AG04449 (cell line): ENCODE measurements at regions of chr1 and their contacts with region 1.

Region 1: DNA sequence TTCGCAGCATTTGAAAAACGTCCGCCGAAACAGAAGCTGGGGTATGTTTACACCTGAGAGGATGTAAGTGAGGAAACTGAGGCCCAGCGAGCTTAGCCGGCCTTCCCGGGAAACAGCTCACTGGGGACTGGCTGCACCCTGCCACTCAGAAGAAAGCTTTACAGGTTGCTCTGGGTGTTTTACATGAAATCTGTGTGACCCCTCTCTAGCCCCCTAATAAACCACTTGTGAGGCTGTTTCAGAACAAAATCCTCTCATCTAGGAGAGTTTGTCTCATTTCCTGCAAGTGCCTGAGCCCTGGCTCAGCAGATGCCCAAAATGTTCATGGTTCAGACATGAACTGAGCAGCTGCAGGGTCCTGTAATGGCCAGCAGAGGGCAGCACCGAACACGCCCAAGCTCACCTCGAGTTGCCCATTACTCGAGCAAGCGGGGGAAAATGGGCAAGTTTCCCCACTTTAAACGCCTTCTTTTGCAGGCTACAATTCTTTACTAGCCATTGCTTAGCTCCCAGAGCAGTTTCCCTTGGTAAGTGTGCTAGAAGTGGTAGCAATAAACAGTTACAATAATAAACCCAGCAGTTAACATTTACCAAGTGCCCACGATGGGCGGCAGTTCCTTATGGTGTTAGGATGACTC is 76.4 kb downstream of the FHAD1 start:
- DNase-seq: peak; percentile 46
- H3K4me3 ChIP-seq: no peak overlapping the region
- CTCF ChIP-seq: peak; percentile 97

Region 2: DNA sequence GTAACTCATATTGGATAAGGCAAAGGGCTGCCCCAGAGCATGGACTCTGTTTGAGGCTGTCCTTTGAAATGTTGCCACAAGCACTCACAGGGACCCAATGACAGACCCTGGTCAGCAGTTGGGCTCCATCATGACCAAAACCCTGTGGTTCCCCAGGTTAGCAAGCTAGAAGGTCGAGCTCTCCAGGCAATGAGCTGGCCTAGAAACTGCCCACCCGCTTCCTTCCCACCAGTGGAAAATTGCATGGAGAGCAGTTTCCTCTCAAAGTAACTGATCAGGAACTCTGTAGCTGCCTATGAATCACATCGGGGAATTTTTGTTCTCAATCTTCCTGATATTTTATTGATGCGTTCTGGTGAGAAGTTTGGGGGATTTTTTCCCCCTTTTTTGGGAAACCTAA is 23.7 kb before region 1 on chr1:
- CTCF ChIA-PET with region 1: interaction called, 35 read pairs
- POLR2A ChIA-PET with region 1: no interaction called
- DNase-seq: no peak
- H3K4me3 ChIP-seq: no peak overlapping the region
- CTCF ChIP-seq: no peak

Region 3: DNA sequence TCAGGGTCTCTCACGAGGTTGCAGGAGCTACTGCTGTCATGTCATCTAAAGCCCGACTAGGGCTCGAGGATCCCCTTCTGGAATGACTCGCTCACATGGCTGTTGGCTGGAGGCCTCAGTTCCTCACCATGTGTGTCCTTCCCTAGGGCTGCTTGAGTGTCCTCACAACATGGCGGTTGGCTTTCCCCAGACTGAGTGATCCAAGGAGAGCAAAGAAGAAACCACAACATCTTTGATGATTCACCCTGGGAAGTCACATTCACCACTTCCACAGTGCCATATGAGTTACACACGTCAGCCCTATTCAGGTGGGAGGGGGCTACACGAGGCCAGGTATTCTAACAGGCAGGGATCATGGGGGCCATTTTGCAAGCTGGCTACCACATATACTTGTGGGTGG is 11.6 kb before region 1 on chr1:
- CTCF ChIA-PET with region 1: interaction called, 73 read pairs
- POLR2A ChIA-PET with region 1: no interaction called
- DNase-seq: no peak
- H3K4me3 ChIP-seq: no peak overlapping the region
- CTCF ChIP-seq: no peak

Region 4: GRCh38 chr1:15345711-15346355 is 22.4 kb after region 1 on chr1:
- CTCF ChIA-PET with region 1: interaction called, 41 read pairs
- POLR2A ChIA-PET with region 1: no interaction called
- DNase-seq: no peak
- H3K4me3 ChIP-seq: no peak overlapping the region
- CTCF ChIP-seq: no peak

Region 5: GRCh38 chr1:15417365-15417934 is 94.0 kb after region 1 on chr1:
- CTCF ChIA-PET with region 1: interaction called, 31 read pairs
- POLR2A ChIA-PET with region 1: no interaction called
- DNase-seq: no peak
- H3K4me3 ChIP-seq: no peak overlapping the region
- CTCF ChIP-seq: no peak

Region 6: GRCh38 chr1:15444468-15445389 is 121.3 kb after region 1 on chr1:
- CTCF ChIA-PET with region 1: interaction called, 11 read pairs
- POLR2A ChIA-PET with region 1: no interaction called
- DNase-seq: no peak
- H3K4me3 ChIP-seq: no peak overlapping the region
- CTCF ChIP-seq: no peak